ENCODE measurements at regions of chr3 and their contacts with region 1.

Region 1: DNA sequence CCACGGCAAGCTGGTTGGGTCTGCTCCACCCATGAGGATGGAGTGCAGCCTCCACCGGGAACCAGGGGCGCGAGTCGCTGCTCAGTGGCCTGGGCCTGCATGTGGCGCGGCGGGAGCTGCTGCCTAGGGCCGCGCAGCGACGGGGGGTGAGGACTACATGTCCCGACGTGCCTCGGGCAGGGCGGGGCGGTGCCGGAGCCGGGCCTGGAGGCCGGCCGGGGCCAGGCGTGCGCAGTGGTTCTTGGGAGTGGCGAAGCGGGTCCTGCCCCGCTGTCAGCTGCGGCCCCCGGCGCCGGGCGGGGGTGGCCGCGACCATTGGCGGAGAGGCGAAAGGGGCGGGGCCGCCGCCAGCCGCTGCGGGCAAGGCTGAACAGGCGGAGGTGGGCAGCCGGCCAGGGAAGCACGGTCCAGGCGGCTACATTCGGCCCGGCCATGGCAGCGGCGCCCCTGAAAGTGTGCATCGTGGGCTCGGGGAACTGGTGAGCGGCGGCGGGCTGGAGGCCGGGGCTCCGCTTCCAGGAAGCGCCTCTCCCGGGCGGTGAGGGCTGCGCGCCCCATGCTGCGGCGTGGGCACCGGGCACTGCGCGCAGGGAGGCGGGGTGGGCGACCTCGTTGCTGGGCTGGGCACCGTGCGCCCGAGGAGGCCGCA is at the start of gene GPD1L:
- DNase-seq: peak; percentile 92
- H3K4me3 Mint-ChIP-seq: peak within 1 kb of the TSS; percentile 96
- H3K27ac Mint-ChIP-seq: peak within 1 kb of the TSS; percentile 46
- H3K4me1 Mint-ChIP-seq: peaks cover 30% of the 10 kb centered on the region
- H3K27me3 Mint-ChIP-seq: no peaks in the 10 kb centered on the region
- total RNA-seq, gene GPD1L: 10.8 to 12.6 TPM

Region 2: DNA sequence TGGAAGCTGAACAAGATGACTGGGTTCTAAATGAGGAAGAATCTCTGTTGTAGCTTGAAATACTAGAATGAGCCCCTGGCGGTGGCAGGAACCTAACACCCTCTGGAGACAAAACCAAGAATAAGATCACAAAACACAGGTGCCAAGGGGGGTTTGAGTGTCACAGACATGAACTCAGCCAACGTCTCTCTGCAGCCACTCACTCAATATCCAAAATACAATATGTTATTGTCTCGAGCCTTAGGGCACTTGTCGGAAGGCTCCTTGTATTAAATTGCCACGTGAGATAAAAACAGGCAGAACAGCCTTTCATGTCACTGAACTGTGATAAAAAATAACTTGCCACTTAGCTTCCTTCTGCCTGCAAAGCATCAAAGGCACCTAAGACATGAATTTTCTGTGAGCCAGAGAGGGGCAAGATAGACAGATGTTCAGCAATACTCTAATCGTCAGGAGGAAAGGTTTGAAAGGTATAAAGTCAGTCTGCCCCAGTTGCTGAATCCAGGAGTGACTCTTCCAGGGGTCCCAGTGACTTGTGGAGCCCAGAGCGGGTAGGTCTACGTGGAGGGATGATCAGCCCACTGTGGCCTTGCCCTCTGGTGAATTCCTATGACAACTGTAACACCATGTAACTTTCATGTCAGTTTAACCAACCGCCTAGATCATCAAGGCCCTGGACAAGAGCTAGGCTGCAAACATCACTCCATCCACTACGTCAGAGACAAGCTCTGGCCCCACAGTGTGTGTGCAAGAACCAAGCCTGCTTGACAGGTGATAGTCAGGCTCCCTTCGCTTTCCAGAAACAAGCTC is 290.6 kb before region 1 on chr3:
- CTCF ChIA-PET with region 1: no interaction called
- intact Hi-C with region 1: no loop called
- DNase-seq: no peak
- H3K4me3 Mint-ChIP-seq: no peak overlapping the region
- H3K27ac Mint-ChIP-seq: no peak overlapping the region
- H3K4me1 Mint-ChIP-seq: no peaks in the 10 kb centered on the region
- H3K27me3 Mint-ChIP-seq: peaks cover 2% of the 10 kb centered on the region

Region 3: GRCh38 chr3:32117324-32117723 is 10.9 kb after region 1 on chr3:
- CTCF ChIA-PET with region 1: no interaction called
- intact Hi-C with region 1: loop called (anchors 1 kb)
- DNase-seq: no peak
- H3K4me3 Mint-ChIP-seq: no peak overlapping the region
- H3K27ac Mint-ChIP-seq: no peak overlapping the region
- H3K4me1 Mint-ChIP-seq: peaks cover 61% of the 10 kb centered on the region
- H3K27me3 Mint-ChIP-seq: no peaks in the 10 kb centered on the region

Region 4: DNA sequence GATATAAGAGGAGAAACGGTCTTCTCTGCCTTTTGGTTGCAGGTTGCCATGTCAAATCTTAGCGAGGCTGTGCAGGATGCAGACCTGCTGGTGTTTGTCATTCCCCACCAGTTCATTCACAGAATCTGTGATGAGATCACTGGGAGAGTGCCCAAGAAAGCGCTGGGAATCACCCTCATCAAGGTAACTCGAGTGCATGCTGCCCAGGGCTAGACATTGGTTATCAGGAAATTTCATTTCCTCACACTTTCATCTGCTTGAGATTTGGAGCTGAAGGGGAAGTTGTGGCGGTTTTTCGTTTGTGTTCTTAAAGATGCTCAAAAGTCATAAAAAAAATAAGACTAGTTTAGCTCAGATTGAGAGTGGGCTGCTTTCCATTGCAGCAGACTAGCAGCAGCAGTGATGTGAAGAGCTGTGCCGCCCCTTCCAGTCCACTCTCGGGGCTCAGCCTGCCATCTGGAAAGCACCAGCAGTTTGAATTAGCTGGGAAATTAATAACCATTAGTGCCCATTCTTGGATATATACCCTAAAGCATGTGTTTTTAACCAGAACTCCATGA is 32.2 kb after region 1 on chr3:
- CTCF ChIA-PET with region 1: interaction called, 4 read pairs
- intact Hi-C with region 1: loop called (anchors 2 kb)
- DNase-seq: peak; percentile 69
- H3K4me3 Mint-ChIP-seq: no peak overlapping the region
- H3K27ac Mint-ChIP-seq: peak overlapping the region; percentile 30
- H3K4me1 Mint-ChIP-seq: peaks cover 19% of the 10 kb centered on the region
- H3K27me3 Mint-ChIP-seq: no peaks in the 10 kb centered on the region

Region 5: GRCh38 chr3:32401556-32402081 is 295.2 kb after region 1 on chr3:
- CTCF ChIA-PET with region 1: no interaction called
- intact Hi-C with region 1: no loop called
- DNase-seq: peak; percentile 77
- H3K4me3 Mint-ChIP-seq: peak overlapping the region; percentile 92
- H3K27ac Mint-ChIP-seq: peak overlapping the region; percentile 99
- H3K4me1 Mint-ChIP-seq: peaks cover 74% of the 10 kb centered on the region
- H3K27me3 Mint-ChIP-seq: no peaks in the 10 kb centered on the region

Region 6: GRCh38 chr3:32502118-32502945 is 395.9 kb after region 1 on chr3 and contains the start of gene CMTM6:
- CTCF ChIA-PET with region 1: no interaction called
- intact Hi-C with region 1: loop called (anchors 5 kb)
- DNase-seq: peak; percentile 81
- H3K4me3 Mint-ChIP-seq: peak within 1 kb of the TSS; percentile 97
- H3K27ac Mint-ChIP-seq: peak within 1 kb of the TSS; percentile 89
- H3K4me1 Mint-ChIP-seq: peaks cover 27% of the 10 kb centered on the region
- H3K27me3 Mint-ChIP-seq: no peaks in the 10 kb centered on the region
- total RNA-seq, gene CMTM6: 43.7 to 44.3 TPM

Measured in activated naive CD4-positive, alpha-beta T cell treated with anti-CD3 and anti-CD28 coated beads for 36 hours (primary cell).